ENCODE measurements at regions of chr17 and their contacts with region 1.

Region 1: GRCh38 chr17:16415031-16415924 is at the start of gene TRPV2:
- DNase-seq: no peak
- H3K4me3 ChIP-seq: peak within 1 kb of the TSS; percentile 68
- H3K27ac ChIP-seq: peak within 1 kb of the TSS; percentile 61
- H3K27me3 ChIP-seq: no peaks in the 10 kb centered on the region
- CTCF ChIP-seq: peak; percentile 11; the same call in 1 of the 2 replicates
- polyA plus RNA-seq, gene TRPV2: 30.8 and 38.4 TPM in 2 replicates

Region 2: DNA sequence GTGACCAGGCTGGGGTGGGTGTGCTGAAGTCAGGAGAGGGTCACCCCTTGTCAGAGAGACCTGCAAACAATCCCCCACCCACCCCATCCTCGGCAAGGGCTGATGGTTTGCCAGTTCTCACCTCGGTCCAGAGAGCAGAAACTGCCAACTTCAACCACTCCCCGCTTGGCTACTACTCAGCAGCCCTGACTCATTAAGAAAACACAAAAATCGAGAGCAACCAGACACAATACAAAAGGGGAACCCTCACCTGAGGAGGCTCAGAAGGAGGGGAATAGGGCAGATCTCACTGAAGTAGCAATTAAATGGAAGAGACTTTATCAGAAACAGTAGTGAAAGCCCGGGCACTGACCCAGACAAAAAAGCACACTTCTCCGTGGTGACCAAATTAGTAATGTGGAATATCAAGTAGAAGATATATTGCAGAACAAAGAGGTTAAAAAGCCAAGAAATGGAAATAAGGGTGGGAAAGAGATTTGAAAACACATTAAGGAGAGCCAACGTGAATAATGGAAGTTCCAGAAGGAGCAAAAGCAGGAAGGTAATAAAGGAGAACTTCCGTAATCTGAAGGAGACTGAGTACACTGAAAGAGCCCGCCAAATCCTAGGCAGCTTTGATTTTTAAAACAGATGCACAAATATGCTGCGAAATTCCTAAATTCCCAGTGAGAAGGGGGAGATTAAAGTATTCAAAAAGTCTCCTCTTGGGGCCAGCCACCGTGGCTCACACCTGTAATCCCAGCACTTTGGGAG is 85.6 kb before region 1 on chr17:
- CTCF ChIA-PET with region 1: no interaction called
- POLR2A ChIA-PET with region 1: no interaction called
- DNase-seq: no peak
- H3K4me3 ChIP-seq: no peak overlapping the region
- H3K27ac ChIP-seq: no peak overlapping the region
- H3K27me3 ChIP-seq: no peaks in the 10 kb centered on the region
- CTCF ChIP-seq: no peak

Region 3: DNA sequence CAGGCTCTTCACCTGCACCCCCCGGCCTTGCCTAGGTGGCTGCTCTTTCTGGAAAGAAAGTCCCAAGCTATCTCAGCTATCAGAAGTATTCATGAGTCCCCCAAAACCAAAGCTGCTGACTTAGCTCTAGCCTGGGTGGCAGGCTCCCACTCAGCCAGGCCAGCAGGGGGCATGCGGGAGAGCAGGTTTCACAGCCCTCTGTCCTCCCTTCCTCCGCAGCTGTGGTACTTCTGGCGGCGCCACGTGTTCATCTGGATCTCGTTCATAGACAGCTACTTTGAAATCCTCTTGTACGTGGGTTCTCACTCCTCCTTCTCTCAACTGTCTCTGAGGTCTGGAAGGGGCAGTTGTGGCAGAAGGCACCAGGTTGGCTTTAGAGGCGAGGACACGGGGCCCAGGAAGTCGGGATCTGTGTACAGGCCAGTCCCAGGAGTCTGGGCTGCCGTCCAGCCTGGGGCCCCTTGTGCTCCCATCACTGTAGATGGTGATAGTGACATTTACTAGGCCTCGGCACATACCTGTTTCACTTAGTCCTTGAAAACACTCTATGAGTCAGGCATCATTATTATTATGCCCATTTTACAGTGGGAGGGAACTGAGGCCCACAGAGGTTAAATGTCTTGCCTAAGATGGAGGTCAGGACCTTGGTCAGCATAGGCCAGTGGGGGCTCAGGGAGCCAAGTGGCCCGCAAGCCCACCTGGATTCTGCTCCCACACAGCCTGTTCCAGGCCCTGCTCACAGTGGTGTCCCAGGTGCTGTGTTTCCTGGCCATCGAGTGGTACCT is 13.0 kb after region 1 on chr17:
- CTCF ChIA-PET with region 1: interaction called, 26 read pairs
- POLR2A ChIA-PET with region 1: interaction called, 5 read pairs
- DNase-seq: no peak
- H3K4me3 ChIP-seq: no peak overlapping the region
- H3K27ac ChIP-seq: peak overlapping the region; percentile 52
- H3K27me3 ChIP-seq: no peaks in the 10 kb centered on the region
- CTCF ChIP-seq: peak; percentile 81

Region 4: DNA sequence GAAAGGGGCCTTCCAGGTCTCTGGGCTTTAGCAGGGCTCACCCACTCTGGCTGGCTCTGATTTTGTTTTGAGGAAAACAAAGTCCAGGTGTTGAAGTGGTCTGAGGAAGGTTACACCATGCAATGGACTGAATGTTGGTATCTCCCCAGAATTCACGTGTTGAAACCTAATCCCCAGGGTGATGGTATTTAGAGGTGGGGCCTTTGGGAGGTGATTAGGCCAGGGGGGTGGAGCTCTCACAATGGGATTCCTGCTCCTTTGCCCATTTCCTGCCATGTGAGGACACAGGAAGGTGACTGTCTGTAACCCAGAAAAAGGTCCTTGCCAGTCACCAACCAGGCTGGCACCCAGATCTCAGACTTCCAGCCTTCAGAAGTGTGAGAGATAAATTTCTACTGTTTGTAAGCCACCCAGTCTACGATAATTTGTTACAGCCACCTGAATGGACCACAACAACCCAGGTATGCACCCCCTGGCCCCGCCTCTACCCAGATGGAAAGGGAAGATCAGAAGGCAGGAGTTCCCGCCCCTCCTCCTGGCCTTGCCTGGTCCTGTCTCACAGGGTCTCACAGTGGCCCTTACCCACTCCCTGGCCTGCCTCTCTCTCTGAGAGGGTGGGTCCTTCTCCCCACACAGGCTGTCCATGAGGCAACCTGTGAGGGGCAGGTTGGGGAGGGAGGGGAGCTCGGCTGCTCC is 44.7 kb after region 1 on chr17:
- CTCF ChIA-PET with region 1: no interaction called
- POLR2A ChIA-PET with region 1: no interaction called
- DNase-seq: no peak
- H3K4me3 ChIP-seq: no peak overlapping the region
- H3K27ac ChIP-seq: no peak overlapping the region
- H3K27me3 ChIP-seq: no peaks in the 10 kb centered on the region
- CTCF ChIP-seq: no peak